PC-9 (cell line): ENCODE measurements at regions of chr6 and their contacts with region 1.

Region 1: DNA sequence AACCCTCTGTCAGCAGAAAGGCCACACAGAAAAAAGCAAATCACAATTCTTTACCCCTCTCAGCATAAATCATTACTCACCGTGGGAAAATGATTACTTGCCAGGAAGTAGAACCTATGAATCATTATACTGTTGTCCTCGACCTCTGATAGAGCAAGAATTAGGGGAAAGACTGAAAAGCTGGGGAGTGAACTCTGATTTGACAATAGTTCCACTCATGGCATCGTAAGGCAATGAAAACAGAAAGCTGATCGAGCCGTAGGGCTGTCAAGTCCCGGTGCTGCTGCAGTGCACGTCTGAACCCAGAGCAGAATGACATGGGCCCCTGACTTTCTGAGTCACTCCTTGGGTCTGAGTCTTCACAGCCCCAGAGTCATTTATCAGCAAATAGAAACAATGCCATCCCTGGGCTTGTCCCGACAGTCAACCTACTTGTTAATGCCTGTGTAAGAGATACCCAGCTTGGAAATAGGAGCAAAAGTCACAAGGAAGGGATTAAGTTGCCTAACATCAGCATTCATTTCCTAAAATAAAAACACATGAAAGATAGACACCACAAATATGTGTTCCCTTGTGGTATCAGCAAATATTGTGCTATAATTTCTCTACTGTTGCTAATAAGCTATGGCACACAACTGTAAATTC is 224.8 kb upstream of the MARCKS start:
- DNase-seq: peak; percentile 74 to 100
- H3K4me3 ChIP-seq: peak overlapping the region; percentile 27; the same call in 1 of the 2 replicates
- H3K27ac ChIP-seq: peak overlapping the region; percentile 99
- H3K4me1 ChIP-seq: peaks cover 68% of the 10 kb centered on the region
- H3K27me3 ChIP-seq: no peaks in the 10 kb centered on the region
- CTCF ChIP-seq: no peak

Region 2: GRCh38 chr6:111709615-111710398 is 1922.5 kb before region 1 on chr6:
- CTCF ChIA-PET with region 1: no interaction called
- POLR2A ChIA-PET with region 1: interaction called, 10 read pairs
- intact Hi-C with region 1: no loop called
- DNase-seq: peak; percentile 54 to 56
- H3K4me3 ChIP-seq: no peak overlapping the region
- H3K27ac ChIP-seq: no peak overlapping the region
- H3K4me1 ChIP-seq: 0 out of 2 replicates have a peak, but pooled peaks cover 5% of the 10 kb centered on the region
- H3K27me3 ChIP-seq: no peaks in the 10 kb centered on the region
- CTCF ChIP-seq: peak; percentile 91

Region 3: GRCh38 chr6:112651239-112651638 is 981.1 kb before region 1 on chr6:
- CTCF ChIA-PET with region 1: no interaction called
- POLR2A ChIA-PET with region 1: no interaction called
- intact Hi-C with region 1: no loop called
- DNase-seq: no peak
- H3K4me3 ChIP-seq: no peak overlapping the region
- H3K27ac ChIP-seq: no peak overlapping the region
- H3K4me1 ChIP-seq: no peaks in the 10 kb centered on the region
- H3K27me3 ChIP-seq: no peaks in the 10 kb centered on the region
- CTCF ChIP-seq: no peak

Region 4: DNA sequence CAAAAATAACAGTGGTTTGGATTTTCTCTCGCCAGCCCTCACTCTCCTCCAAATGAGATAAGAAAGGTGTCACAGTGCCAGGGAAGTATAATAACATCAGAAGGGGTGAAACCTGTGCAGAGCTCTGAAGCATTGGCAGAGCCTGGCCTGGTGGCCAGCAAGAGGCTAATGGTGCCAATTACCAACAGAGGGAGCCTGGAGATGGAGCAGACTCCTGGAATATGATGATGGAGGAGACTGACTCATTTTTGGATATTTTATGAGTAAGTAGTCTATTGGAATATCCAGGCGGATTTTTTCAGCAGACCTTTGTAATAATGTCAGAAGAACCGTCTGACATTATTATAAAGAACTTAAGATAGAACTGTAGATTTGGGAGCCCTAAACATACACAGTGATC is 217.8 kb before region 1 on chr6:
- CTCF ChIA-PET with region 1: no interaction called
- POLR2A ChIA-PET with region 1: interaction called, 6 read pairs
- intact Hi-C with region 1: loop called (anchors 5 kb)
- DNase-seq: peak; percentile 35 to 66
- H3K4me3 ChIP-seq: no peak overlapping the region
- H3K27ac ChIP-seq: no peak overlapping the region
- H3K4me1 ChIP-seq: peaks cover 30% of the 10 kb centered on the region
- H3K27me3 ChIP-seq: no peaks in the 10 kb centered on the region
- CTCF ChIP-seq: peak; percentile 67; the same call in 1 of the 2 replicates

Region 5: DNA sequence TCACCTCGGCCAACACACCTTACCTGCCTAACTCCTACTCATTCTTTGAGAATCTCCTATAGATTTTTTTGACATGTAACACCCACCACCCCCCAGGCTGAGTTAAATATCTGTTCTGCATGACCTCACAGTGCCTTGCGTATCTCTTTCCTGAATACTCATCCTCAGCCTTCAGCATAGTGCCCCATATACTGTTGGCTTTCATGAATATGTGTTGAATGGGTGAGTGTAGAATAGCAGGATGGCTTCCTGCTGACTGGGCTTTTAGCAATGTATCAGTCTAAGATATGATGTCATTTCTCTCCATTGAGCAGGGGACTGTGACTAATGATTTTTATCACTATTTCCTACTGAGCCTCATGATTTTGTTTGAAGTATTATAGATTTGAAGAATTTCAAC is 136.8 kb before region 1 on chr6:
- CTCF ChIA-PET with region 1: no interaction called
- POLR2A ChIA-PET with region 1: no interaction called
- intact Hi-C with region 1: loop called (anchors 1 kb)
- DNase-seq: peak in 1 of 2 experiments; percentile 70
- H3K4me3 ChIP-seq: no peak overlapping the region
- H3K27ac ChIP-seq: peak overlapping the region; percentile 75
- H3K4me1 ChIP-seq: peaks cover 59% of the 10 kb centered on the region
- H3K27me3 ChIP-seq: no peaks in the 10 kb centered on the region
- CTCF ChIP-seq: no peak

Region 6: DNA sequence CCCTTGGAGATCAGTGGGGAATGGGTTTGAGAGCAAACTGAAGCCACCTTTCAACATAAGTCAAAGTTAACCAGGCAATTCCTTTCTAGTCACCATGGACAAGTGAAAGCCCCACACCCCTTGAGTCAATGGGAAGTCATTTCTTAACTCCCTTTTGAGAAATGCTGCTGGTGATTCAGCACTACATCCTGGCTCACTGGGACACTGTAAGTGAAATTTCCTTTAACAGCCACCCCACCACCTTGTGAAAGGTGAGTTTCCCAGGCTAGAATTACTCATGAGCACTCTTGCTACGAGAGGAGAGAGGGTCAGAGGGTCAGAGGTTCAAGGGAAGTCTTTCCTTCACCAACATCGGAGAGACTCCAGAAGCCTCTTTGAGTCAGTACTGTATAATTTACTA is 131.5 kb after region 1 on chr6:
- CTCF ChIA-PET with region 1: no interaction called
- POLR2A ChIA-PET with region 1: no interaction called
- intact Hi-C with region 1: loop called (anchors 2 kb)
- DNase-seq: peak; percentile 43 to 99
- H3K4me3 ChIP-seq: peak overlapping the region; percentile 18; the same call in 1 of the 2 replicates
- H3K27ac ChIP-seq: peak overlapping the region; percentile 97
- H3K4me1 ChIP-seq: peaks cover 38% of the 10 kb centered on the region
- H3K27me3 ChIP-seq: no peaks in the 10 kb centered on the region
- CTCF ChIP-seq: no peak

Region 7: GRCh38 chr6:114108119-114109002 is 476.0 kb after region 1 on chr6:
- CTCF ChIA-PET with region 1: no interaction called
- POLR2A ChIA-PET with region 1: no interaction called
- intact Hi-C with region 1: no loop called
- DNase-seq: peak; percentile 60 to 66
- H3K4me3 ChIP-seq: no peak overlapping the region
- H3K27ac ChIP-seq: no peak overlapping the region
- H3K4me1 ChIP-seq: no peaks in the 10 kb centered on the region
- H3K27me3 ChIP-seq: no peaks in the 10 kb centered on the region
- CTCF ChIP-seq: peak; percentile 87